ENCODE measurements at regions of chr1 and their contacts with region 1.

Region 1: GRCh38 chr1:11248155-11248554 is 14.2 kb downstream of the MTOR start:
- DNase-seq: no peak
- H3K4me3 ChIP-seq: no peak overlapping the region
- H3K27ac ChIP-seq: peak overlapping the region in 1 of 2 donors; percentile 53
- H3K4me1 ChIP-seq: peaks cover 7% of the 10 kb centered on the region
- H3K27me3 ChIP-seq: no peaks in the 10 kb centered on the region
- CTCF ChIP-seq: no peak
- POLR2A ChIP-seq: no peak

Region 2: DNA sequence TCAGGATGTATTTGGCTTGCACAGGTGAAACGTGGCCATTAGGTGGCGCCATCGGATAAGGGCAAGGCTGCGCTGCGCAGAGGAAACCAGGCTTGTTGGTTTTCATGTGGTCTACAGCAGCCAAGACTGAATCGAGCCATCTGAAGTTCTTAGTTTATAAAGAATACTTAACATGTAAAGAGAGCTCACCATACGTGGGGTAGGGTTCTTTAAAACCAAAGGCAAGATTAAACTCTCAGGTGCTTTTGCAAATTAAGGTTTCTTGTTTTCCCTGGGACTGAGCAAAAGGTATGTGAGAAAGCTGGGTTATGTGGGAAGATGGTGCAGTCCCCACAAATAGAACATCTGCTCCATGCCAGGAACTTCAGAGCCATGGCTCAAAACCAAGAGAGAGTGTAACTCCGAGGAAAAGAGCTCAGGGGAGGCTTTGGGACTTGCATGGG is 210.4 kb before region 1 on chr1:
- intact Hi-C with region 1: loop called (anchors 10 kb)
- DNase-seq: peak; percentile 85
- H3K4me3 ChIP-seq: no peak overlapping the region
- H3K27ac ChIP-seq: no peak overlapping the region
- H3K4me1 ChIP-seq: no peaks in the 10 kb centered on the region
- H3K27me3 ChIP-seq: no peaks in the 10 kb centered on the region
- CTCF ChIP-seq: peak; percentile 77 to 96 (median 92)
- POLR2A ChIP-seq: no peak

Region 3: DNA sequence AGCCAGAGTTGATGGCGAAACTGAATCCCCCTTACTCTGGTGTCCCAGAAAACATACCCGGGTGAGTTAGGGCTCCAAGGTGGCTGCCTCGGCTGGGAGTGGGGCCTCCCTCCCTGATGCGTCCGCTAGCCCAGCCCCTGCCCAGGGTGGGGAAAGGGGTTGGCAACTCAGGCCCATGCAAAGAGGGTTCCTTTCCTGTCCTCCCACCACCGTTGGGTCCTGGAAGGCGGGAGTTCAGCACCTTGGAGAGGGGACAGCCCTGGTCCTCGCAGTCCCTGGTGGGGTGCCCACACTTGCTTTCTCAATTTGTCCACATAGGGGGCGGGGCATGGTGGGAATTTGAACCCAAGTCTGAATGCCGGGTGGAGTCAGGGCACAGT is 194.4 kb before region 1 on chr1:
- intact Hi-C with region 1: no loop called
- DNase-seq: no peak
- H3K4me3 ChIP-seq: no peak overlapping the region
- H3K27ac ChIP-seq: no peak overlapping the region
- H3K4me1 ChIP-seq: peaks cover 3% of the 10 kb centered on the region
- H3K27me3 ChIP-seq: no peaks in the 10 kb centered on the region
- CTCF ChIP-seq: no peak
- POLR2A ChIP-seq: no peak

Region 4: GRCh38 chr1:11641776-11642305 is 393.7 kb after region 1 on chr1:
- intact Hi-C with region 1: loop called (anchors 5 kb)
- DNase-seq: no peak
- H3K4me3 ChIP-seq: no peak overlapping the region
- H3K27ac ChIP-seq: no peak overlapping the region
- H3K4me1 ChIP-seq: no peaks in the 10 kb centered on the region
- H3K27me3 ChIP-seq: no peaks in the 10 kb centered on the region
- CTCF ChIP-seq: no peak
- POLR2A ChIP-seq: no peak